WTC11 (cell line): ENCODE measurements at regions of chr4 and their contacts with region 1.

Region 1: GRCh38 chr4:17324386-17324830 is 187.5 kb downstream of the QDPR start:
- DNase-seq: peak; percentile 53
- ATAC-seq: peak; percentile 56
- H3K4me3 Mint-ChIP-seq: no peak overlapping the region
- H3K27ac Mint-ChIP-seq: no peak overlapping the region
- H3K4me1 Mint-ChIP-seq: peaks cover 46% of the 10 kb centered on the region
- H3K27me3 Mint-ChIP-seq: no peaks in the 10 kb centered on the region; the same call in 1 of the 2 replicates
- CTCF ChIP-seq: peak; percentile 67

Region 2: DNA sequence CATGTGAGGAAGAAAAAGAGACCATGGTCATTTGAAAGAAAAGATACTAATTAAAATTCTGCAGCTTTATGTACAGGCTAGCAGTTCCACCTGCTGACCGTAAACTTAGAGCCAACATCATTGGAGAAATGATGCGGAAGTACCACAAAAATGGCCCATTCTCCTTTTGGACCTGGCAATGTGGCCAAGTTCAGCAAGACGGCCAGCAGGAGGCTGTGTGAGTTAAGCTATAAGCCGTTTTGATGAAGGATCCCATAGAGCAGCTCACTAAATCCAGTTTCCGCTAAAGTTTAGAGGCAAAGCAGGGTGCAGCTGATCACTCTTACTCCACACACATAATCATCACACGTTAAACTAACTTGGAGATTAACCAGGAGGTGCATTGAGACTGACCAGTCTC is 559.8 kb before region 1 on chr4:
- CTCF ChIA-PET with region 1: interaction called, 15 read pairs
- POLR2A ChIA-PET with region 1: no interaction called
- DNase-seq: peak; percentile 57
- ATAC-seq: peak; percentile 86
- H3K4me3 Mint-ChIP-seq: no peak overlapping the region
- H3K27ac Mint-ChIP-seq: no peak overlapping the region
- H3K4me1 Mint-ChIP-seq: peaks cover 38% of the 10 kb centered on the region
- H3K27me3 Mint-ChIP-seq: no peaks in the 10 kb centered on the region
- CTCF ChIP-seq: peak; percentile 50; the same call in 1 of the 2 replicates

Region 3: DNA sequence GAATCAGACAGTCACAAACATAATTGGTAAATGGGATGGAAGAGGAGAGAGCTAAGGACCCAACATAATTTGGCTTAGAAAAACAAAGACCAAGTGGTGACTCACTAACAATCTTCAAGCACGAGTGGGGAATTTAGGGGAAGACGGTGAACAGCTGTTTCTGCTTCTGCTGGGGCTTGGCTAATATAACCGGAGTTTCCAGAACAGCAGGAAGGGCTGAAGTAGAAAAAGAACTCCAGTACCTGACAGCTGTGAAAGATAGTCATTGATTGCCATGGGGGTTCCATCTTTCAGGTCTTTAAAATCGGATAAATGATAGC is 135.0 kb before region 1 on chr4:
- CTCF ChIA-PET with region 1: no interaction called
- POLR2A ChIA-PET with region 1: no interaction called
- DNase-seq: no peak
- ATAC-seq: no peak
- H3K4me3 Mint-ChIP-seq: no peak overlapping the region
- H3K27ac Mint-ChIP-seq: no peak overlapping the region
- H3K4me1 Mint-ChIP-seq: peaks cover 35% of the 10 kb centered on the region
- H3K27me3 Mint-ChIP-seq: peaks cover 3% of the 10 kb centered on the region
- CTCF ChIP-seq: no peak

Region 4: GRCh38 chr4:17232566-17233253 is 91.7 kb before region 1 on chr4:
- CTCF ChIA-PET with region 1: no interaction called
- POLR2A ChIA-PET with region 1: no interaction called
- DNase-seq: no peak
- ATAC-seq: peak; percentile 63
- H3K4me3 Mint-ChIP-seq: no peak overlapping the region
- H3K27ac Mint-ChIP-seq: no peak overlapping the region
- H3K4me1 Mint-ChIP-seq: peaks cover 13% of the 10 kb centered on the region
- H3K27me3 Mint-ChIP-seq: no peaks in the 10 kb centered on the region; the same call in 1 of the 2 replicates
- CTCF ChIP-seq: no peak

Region 5: GRCh38 chr4:17280261-17281018 is 44.0 kb before region 1 on chr4:
- CTCF ChIA-PET with region 1: interaction called, 11 read pairs
- POLR2A ChIA-PET with region 1: no interaction called
- DNase-seq: no peak
- ATAC-seq: peak; percentile 60; the same call in 1 of the 2 replicates
- H3K4me3 Mint-ChIP-seq: no peak overlapping the region
- H3K27ac Mint-ChIP-seq: no peak overlapping the region
- H3K4me1 Mint-ChIP-seq: peaks cover 33% of the 10 kb centered on the region
- H3K27me3 Mint-ChIP-seq: peaks cover 4% of the 10 kb centered on the region; the same call in 1 of the 2 replicates
- CTCF ChIP-seq: no peak

Region 6: DNA sequence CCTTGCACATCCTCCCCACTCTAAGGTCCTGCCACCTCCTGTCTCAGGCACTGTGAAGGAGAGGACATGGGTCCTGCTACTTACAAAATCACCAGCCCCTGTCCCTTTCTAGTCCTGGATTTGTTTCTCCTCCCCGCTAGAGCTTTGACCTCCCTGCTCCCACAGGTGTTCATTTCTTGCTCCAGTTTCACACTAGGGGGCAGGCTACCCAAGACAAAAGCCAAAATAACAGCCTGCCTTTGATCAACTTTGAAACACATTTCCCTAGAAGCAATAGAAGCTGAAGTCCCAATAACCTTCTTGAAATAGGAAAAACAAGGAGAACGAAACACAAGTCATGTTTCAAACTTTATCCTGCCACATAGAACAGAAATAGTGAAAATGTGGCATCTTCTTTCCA is 23.0 kb after region 1 on chr4:
- CTCF ChIA-PET with region 1: interaction called, 10 read pairs
- POLR2A ChIA-PET with region 1: no interaction called
- DNase-seq: peak; percentile 57
- ATAC-seq: peak; percentile 72
- H3K4me3 Mint-ChIP-seq: no peak overlapping the region
- H3K27ac Mint-ChIP-seq: no peak overlapping the region
- H3K4me1 Mint-ChIP-seq: peaks cover 20% of the 10 kb centered on the region
- H3K27me3 Mint-ChIP-seq: no peaks in the 10 kb centered on the region
- CTCF ChIP-seq: peak; percentile 42

Region 7: GRCh38 chr4:17447675-17448298 is 123.4 kb after region 1 on chr4:
- CTCF ChIA-PET with region 1: interaction called, 17 read pairs
- POLR2A ChIA-PET with region 1: no interaction called
- DNase-seq: peak; percentile 45
- ATAC-seq: peak; percentile 97
- H3K4me3 Mint-ChIP-seq: no peak overlapping the region
- H3K27ac Mint-ChIP-seq: peak overlapping the region; percentile 0; the same call in 1 of the 2 replicates
- H3K4me1 Mint-ChIP-seq: no peaks in the 10 kb centered on the region
- H3K27me3 Mint-ChIP-seq: peaks cover 1% of the 10 kb centered on the region; the same call in 1 of the 2 replicates
- CTCF ChIP-seq: no peak; the same call in 1 of the 2 replicates